Adrenal gland (tissue), 19 donors: ENCODE measurements at regions of chr20 and their contacts with region 1.

Region 1: DNA sequence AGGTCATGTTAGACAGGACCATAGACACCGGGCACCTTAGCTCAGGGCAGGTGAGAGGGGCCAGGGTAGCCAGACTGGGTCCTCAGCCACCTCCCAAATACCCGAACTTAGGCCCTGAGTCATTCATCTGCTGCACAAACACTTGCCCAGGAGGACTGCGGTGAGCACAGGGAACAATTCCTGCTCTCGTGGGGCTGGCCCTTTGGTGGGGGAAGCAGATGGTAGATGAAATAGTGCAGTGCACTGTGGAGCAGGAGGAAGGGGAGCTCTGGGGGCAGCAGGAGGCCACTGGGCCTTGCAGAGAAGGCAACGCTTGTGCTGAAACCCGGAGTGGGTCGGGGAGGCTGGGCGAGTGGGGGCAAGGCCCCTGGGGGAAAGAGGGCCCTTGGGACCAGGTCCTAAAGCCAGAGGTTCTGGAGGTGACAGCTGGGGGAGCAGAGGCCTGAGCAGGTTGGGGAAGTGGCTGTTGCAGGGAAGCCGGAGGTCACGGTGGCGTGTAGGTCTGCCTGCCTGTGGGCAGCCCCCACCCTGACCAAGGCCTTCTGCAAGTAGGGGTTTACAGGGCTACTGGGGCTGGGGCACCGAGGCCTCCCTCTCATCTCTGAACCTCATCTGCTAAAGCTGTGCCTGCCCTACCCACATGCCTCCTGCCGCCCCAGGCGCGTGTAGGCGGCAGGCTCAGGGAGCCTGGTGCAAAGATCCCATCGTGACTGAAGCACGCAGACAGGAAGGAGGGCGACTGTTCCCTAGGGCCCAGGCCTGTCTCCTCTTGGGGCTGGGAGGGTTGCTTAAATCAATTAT is 4.7 kb upstream of the NPBWR2 start:
- DNase-seq: peak in 4 of 7 donors; percentile 4 to 65 (median 8)
- H3K4me3 ChIP-seq: no peak overlapping the region
- H3K27ac ChIP-seq: peak overlapping the region in 1 of 5 donors; percentile 69
- H3K4me1 ChIP-seq: no peaks in the 10 kb centered on the region
- H3K27me3 ChIP-seq: no peaks in the 10 kb centered on the region
- CTCF ChIP-seq: no peak
- POLR2A ChIP-seq: no peak

Region 2: GRCh38 chr20:64049060-64049877 is 62.8 kb before region 1 on chr20 and contains the start of gene SOX18:
- intact Hi-C with region 1: loop called in 1 of 2 experiments (anchors 5 kb)
- DNase-seq: no peak
- H3K4me3 ChIP-seq: peak within 1 kb of the TSS in 1 of 4 donors; percentile 32
- H3K27ac ChIP-seq: peak within 1 kb of the TSS in 1 of 5 donors; percentile 80
- H3K4me1 ChIP-seq: no peaks in the 10 kb centered on the region
- H3K27me3 ChIP-seq: peaks cover 60% of the 10 kb centered on the region
- CTCF ChIP-seq: no peak
- POLR2A ChIP-seq: peak in 1 of 2 donors; percentile 50
- total RNA-seq, gene SOX18: 0.89 to 45.2 (median 30.4) TPM